PC-9 (cell line): ENCODE measurements at regions of chr11 and their contacts with region 1.

Region 1: DNA sequence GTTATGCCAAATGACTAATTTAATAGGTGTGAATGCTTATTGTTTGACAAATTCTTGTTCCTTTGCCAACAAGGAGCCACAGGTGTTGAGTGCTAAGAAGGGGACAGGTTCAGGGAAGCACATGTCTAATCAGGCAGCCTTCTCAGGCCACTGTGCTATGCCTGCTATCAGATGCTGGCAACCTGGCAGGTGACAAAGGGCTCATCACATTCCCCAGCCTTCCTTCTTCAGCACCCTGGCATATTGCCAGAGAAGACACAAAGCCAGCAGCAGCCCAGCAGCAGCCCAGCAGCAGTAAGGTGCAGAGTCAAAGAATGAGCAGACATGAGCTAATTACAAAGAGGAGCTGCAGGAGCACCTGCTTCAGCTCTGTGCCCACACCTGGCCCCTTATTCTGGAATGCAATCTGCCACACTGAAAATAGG is 68.2 kb downstream of the GUCY1A2 start:
- DNase-seq: peak; percentile 54 to 78
- H3K4me3 ChIP-seq: no peak overlapping the region
- H3K27ac ChIP-seq: no peak overlapping the region
- H3K4me1 ChIP-seq: no peaks in the 10 kb centered on the region
- H3K27me3 ChIP-seq: no peaks in the 10 kb centered on the region
- CTCF ChIP-seq: no peak

Region 2: GRCh38 chr11:107118025-107118720 is 168.1 kb after region 1 on chr11:
- CTCF ChIA-PET with region 1: no interaction called
- POLR2A ChIA-PET with region 1: interaction called, 27 read pairs
- intact Hi-C with region 1: no loop called
- DNase-seq: no peak
- H3K4me3 ChIP-seq: no peak overlapping the region
- H3K27ac ChIP-seq: no peak overlapping the region
- H3K4me1 ChIP-seq: no peaks in the 10 kb centered on the region
- H3K27me3 ChIP-seq: no peaks in the 10 kb centered on the region
- CTCF ChIP-seq: no peak